ENCODE measurements at regions of chr1 and their contacts with region 1.

Region 1: GRCh38 chr1:232589812-232590743 is 39.9 kb downstream of the SIPA1L2 start:
- H3K4me3 Mint-ChIP-seq: peak overlapping the region; percentile 46
- H3K27ac Mint-ChIP-seq: peak overlapping the region; percentile 95
- H3K4me1 Mint-ChIP-seq: peaks cover 63% of the 10 kb centered on the region
- H3K27me3 Mint-ChIP-seq: no peaks in the 10 kb centered on the region

Region 2: DNA sequence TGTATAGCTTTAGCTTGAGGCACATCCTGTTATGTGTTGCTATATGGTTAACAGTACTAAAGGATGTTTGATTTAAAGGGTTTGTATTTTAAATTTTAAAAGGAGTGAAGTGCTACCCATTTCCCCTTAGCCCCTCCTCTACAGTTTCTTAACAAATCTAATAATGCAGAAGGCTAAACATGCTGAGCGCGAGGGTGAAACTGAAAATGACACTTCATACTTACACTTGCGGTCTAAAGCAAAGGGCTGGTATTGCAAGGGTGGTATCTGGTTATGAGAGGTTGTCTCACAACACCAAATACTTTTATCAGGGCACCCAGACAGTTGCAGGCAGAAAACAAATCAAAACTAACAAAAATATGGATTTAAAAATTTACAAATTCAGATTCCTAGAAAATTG is 132.5 kb before region 1 on chr1:
- intact Hi-C with region 1: no loop called
- H3K4me3 Mint-ChIP-seq: no peak overlapping the region
- H3K27ac Mint-ChIP-seq: no peak overlapping the region
- H3K4me1 Mint-ChIP-seq: peaks cover 19% of the 10 kb centered on the region
- H3K27me3 Mint-ChIP-seq: no peaks in the 10 kb centered on the region

Region 3: GRCh38 chr1:232620356-232620969 is 30.4 kb after region 1 on chr1:
- intact Hi-C with region 1: loop called (anchors 2 kb)
- H3K4me3 Mint-ChIP-seq: peak overlapping the region; percentile 63
- H3K27ac Mint-ChIP-seq: peak overlapping the region; percentile 89
- H3K4me1 Mint-ChIP-seq: peaks cover 77% of the 10 kb centered on the region
- H3K27me3 Mint-ChIP-seq: no peaks in the 10 kb centered on the region

Region 4: DNA sequence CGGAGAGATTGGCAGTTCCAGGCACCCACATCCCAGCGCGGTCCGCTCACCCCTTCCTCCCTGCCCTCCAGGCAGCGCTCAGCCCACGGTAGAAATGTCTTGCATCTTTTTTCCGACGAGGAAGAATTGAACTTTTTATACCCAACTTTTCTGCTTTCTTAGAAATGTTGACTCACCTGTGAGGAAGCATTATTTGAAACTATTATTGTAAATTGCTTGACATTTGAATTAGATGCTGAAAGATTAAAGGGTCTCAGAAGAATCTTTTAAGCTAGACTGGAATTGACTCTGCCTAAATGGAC is 40.8 kb after region 1 on chr1:
- intact Hi-C with region 1: no loop called
- H3K4me3 Mint-ChIP-seq: peak overlapping the region; percentile 86
- H3K27ac Mint-ChIP-seq: peak overlapping the region; percentile 86
- H3K4me1 Mint-ChIP-seq: peaks cover 41% of the 10 kb centered on the region
- H3K27me3 Mint-ChIP-seq: no peaks in the 10 kb centered on the region

Measured in dendritic cell treated with granulocyte-macrophage colony-stimulating factor and Interleukin-4, amounts not matched to agents 40 ng/mL and 50 ng/mL, for 4 days (primary cell).